ENCODE measurements at regions of chr16 and their contacts with region 1.

Region 1: DNA sequence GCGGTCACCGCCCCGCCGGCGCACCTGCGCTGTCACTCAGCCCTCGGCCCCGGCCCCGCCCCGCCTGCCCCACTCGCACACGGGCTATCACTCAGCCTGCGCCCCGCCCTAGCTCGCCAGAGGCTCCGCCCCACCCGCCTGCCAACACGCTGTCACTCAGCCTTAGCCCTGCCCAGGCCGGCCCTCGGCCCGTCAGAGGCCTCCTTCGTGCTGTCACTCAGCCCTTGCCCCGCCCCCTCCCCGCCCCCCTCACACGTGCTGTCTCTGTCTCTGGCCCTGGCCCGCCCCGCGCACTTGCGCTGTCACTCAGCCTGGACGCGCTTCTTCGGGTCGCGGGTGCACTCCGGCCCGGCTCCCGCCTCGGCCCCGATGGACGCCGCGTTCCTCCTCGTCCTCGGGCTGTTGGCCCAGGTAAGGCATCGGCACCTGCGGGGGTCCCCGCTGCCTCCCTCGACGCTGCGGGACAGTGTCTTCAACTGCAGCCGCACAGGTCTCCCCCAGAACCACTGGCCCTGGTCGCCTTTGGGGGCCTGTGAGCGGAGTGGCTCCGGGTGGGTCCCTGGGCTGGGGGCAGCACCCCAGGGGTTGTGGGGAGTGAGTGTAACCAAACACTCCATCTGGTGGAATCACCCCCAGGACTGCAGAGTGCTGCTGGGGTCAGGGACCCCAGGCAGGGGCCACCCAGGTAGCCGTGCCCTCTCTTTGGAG is at the start of gene CDH15:
- DNase-seq: peak; percentile 98
- H3K4me3 Mint-ChIP-seq: peak within 1 kb of the TSS; percentile 57
- H3K27ac Mint-ChIP-seq: no peak within 1 kb of the TSS
- H3K4me1 Mint-ChIP-seq: peaks cover 7% of the 10 kb centered on the region
- H3K27me3 Mint-ChIP-seq: peaks cover 4% of the 10 kb centered on the region
- total RNA-seq, gene CDH15: not detected

Region 2: GRCh38 chr16:88856828-88857733 is 314.5 kb before region 1 on chr16 and contains the starts of genes GALNS and TRAPPC2L:
- CTCF ChIA-PET with region 1: interaction called, 9 read pairs
- POLR2A ChIA-PET with region 1: no interaction called
- intact Hi-C with region 1: loop called (anchors 2 kb)
- DNase-seq: peak; percentile 99
- H3K4me3 Mint-ChIP-seq: peak within 1 kb of the TSS; percentile 93
- H3K27ac Mint-ChIP-seq: peak within 1 kb of the TSS; percentile 72
- H3K4me1 Mint-ChIP-seq: peaks cover 23% of the 10 kb centered on the region
- H3K27me3 Mint-ChIP-seq: no peaks in the 10 kb centered on the region
- total RNA-seq, gene GALNS: 22.0 to 24.1 TPM
- total RNA-seq, gene TRAPPC2L: 63.6 to 71.5 TPM

Region 3: GRCh38 chr16:88941913-88942909 is 229.4 kb before region 1 on chr16:
- CTCF ChIA-PET with region 1: interaction called, 13 read pairs
- POLR2A ChIA-PET with region 1: no interaction called
- intact Hi-C with region 1: loop called (anchors 1 kb)
- DNase-seq: peak; percentile 66
- H3K4me3 Mint-ChIP-seq: peak overlapping the region; percentile 23
- H3K27ac Mint-ChIP-seq: no peak overlapping the region
- H3K4me1 Mint-ChIP-seq: no peaks in the 10 kb centered on the region
- H3K27me3 Mint-ChIP-seq: peaks cover 37% of the 10 kb centered on the region

Region 4: DNA sequence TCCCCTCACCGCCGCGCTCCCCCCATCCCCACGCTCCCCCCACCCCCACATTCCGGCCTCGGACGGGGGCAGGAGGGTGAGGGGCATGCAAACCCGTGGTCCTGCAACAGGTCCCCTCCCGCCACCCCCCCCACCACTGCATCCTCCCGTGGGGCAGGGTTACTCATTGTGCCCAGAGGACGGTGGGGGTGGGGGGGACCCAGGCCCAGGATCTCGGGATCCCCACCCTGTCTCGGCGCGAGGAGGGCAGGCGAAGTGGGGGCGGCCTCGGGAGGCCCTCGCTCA is 20.2 kb after region 1 on chr16:
- CTCF ChIA-PET with region 1: no interaction called
- POLR2A ChIA-PET with region 1: no interaction called
- intact Hi-C with region 1: loop called (anchors 1 kb)
- DNase-seq: no peak
- H3K4me3 Mint-ChIP-seq: no peak overlapping the region
- H3K27ac Mint-ChIP-seq: no peak overlapping the region
- H3K4me1 Mint-ChIP-seq: no peaks in the 10 kb centered on the region
- H3K27me3 Mint-ChIP-seq: no peaks in the 10 kb centered on the region